Testis (tissue), 5 donors: ENCODE measurements at regions of chr6 and their contacts with region 1.

Region 1: GRCh38 chr6:75266716-75267291 is 17.8 kb downstream of the TMEM30A start:
- DNase-seq: no peak
- H3K4me3 ChIP-seq: no peak overlapping the region
- H3K27ac ChIP-seq: no peak overlapping the region
- H3K4me1 ChIP-seq: peaks cover 15% of the 10 kb centered on the region
- H3K27me3 ChIP-seq: no peaks in the 10 kb centered on the region
- CTCF ChIP-seq: peak; percentile 51 to 66 (median 57)
- POLR2A ChIP-seq: no peak

Region 2: DNA sequence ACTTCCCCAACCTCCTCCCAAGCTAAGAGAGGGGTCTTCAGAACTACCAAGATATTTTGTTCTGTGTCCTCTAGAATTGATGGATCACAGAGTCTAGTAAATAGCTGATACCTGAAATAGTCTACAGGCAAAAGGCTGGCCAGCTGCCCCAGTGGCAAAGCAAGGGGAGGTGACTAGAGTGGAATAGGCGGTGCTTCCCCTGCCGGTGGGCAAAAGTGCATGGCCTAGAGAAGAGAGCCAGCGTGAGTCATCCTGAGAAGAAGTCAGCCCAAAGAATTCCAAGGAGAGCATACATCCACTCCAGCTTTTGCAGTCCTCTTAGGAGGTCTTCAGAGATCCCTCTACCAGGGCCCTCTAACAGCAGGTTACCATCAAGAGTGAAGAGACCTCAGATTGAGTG is 1927.5 kb before region 1 on chr6:
- intact Hi-C with region 1: no loop called
- DNase-seq: no peak
- H3K4me3 ChIP-seq: no peak overlapping the region
- H3K27ac ChIP-seq: no peak overlapping the region
- H3K4me1 ChIP-seq: no peaks in the 10 kb centered on the region
- H3K27me3 ChIP-seq: no peaks in the 10 kb centered on the region
- CTCF ChIP-seq: no peak
- POLR2A ChIP-seq: no peak

Region 3: DNA sequence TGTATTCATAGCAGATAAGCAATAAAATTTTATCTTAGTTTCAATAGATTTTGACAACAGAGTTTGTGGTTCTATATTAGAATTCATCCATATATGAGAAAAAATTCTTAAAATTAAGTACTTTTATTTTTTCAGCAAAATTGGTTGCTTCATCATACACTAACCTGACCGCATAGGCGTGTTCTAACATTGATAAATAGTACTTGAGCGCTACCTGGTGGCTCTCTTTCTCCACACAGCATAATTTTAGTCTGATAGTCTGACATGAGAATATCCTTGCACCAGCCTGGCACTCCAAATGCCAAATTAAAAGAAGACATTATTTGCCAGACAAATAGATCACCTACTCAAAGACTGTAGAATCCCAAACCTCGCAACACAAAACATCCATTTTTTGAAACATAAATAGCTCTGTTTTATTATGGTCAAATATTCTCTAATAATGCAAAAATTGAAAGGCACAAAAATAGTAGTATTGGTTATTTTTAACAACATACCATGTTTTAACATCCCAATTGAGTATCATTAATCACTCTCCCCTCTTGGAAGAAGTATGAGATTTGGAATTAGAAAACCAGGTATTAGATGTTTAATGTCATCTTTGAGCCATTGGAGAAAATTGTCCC is 259.8 kb after region 1 on chr6:
- intact Hi-C with region 1: loop called (anchors 10 kb)
- DNase-seq: peak; percentile 79
- H3K4me3 ChIP-seq: no peak overlapping the region
- H3K27ac ChIP-seq: no peak overlapping the region
- H3K4me1 ChIP-seq: no peaks in the 10 kb centered on the region
- H3K27me3 ChIP-seq: no peaks in the 10 kb centered on the region
- CTCF ChIP-seq: peak; percentile 52 to 77 (median 61)
- POLR2A ChIP-seq: no peak